ENCODE measurements at regions of chr1 and their contacts with region 1.

Region 1: DNA sequence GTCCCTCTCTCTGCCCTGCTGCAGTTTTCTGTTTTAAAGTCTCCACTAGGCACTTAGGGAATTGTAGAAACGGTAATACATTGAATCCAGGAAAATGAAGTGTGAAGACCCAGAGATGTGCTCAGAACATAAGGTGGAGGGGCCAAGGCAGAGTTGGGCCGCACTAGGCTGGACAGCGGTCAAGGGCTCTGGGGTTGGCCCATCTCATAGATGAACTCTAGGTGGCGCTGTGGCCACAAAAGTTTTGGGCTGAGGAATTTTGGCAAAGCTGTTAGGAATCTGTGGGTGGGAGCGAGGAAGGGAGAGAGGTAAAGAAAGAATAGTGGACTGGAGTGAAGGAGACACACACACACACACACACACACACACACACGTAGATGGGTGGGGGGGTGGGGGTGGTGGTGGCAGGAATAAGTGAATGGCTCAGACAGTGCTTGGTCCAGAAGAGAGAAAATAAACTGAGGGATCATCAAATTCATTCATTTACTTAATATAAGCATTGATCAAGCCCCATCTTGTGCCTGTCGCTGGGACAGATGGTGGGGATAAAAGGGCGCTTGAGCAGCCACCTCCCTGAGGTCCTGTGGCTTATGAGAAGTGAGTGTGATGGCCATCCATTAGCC is 258.5 kb downstream of the TRABD2B start:
- DNase-seq: peak; percentile 62
- ATAC-seq: peak; percentile 94

Region 2: DNA sequence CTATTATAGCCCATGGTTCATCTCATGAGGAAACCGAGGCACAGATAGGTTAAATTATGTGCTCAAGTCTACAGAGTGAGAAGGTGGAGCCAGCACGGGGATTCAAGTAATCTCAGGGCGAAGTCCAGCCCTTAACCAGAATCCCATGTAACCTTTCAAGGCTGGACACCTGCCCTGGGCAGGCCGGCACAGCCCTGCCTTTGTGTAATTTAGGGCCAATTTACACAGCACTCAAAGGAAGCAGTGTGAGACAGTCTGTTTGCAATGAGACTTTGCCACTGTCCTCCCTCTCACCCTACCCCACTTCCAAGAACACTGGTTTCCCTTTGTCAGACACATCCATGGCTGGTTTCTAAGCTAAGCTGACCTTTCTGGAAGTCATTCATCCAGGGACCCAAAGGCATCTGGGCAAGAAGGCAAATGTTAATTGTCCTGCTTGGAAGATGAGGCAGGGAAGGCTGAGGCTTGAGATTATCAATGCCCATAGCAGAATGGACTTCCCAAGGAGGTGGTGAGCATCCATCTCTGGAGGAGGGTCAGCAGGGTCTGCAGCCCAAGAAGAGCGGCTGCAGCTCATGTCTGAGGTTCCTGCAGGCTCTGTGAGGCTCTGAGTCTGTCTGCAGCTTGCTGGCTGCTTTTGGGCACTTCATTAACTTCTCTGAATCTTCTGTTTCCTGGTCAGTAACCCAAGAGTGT is 99.3 kb after region 1 on chr1:
- intact Hi-C with region 1: no loop called
- DNase-seq: peak; percentile 22
- ATAC-seq: peak; percentile 36

Region 3: GRCh38 chr1:48061162-48062136 is 322.8 kb after region 1 on chr1:
- intact Hi-C with region 1: loop called (anchors 2 kb)
- DNase-seq: no peak
- ATAC-seq: peak; percentile 85

Region 4: DNA sequence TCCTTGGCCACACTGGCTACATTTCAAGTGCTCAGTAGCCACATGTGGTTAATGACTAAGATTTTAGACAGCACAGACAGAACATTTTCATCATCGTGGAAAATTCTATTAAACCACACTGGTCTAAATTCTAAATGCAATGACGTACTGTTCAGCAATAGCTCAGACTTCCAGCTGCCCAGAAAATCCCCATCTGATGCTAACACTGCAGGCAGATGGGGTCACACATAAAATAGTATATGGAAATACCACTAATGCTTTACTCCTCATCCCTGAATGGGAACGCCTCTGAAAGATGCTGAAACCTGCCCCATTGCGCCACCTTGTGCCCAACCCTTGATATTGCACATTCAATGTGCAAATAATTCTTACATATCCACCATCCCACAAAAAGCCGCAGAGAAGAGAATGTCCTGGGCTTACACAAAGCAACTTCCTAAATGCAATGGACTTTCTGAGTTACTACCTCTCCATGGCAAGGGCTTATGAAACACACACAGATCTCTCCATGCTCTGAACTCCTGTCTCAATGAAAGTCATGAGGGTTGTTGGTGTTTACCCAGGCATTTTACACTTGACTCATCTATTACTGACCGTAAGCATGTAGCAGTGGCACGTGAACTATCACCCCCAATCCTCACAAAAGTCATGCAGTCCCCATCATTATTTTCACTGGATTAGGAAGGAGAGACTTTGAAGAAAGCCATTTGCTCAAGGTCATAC is 463.5 kb after region 1 on chr1:
- intact Hi-C with region 1: loop called (anchors 10 kb)
- DNase-seq: peak; percentile 65
- ATAC-seq: peak; percentile 89